Dendritic cell treated with granulocyte-macrophage colony-stimulating factor and Interleukin-4, amounts not matched to agents 40 ng/mL and 50 ng/mL, for 4 days (primary cell): ENCODE measurements at regions of chr2 and their contacts with region 1.

Region 1: GRCh38 chr2:108570416-108570815 is 36.1 kb downstream of the LIMS1 start:
- H3K4me3 Mint-ChIP-seq: no peak overlapping the region
- H3K27ac Mint-ChIP-seq: no peak overlapping the region
- H3K4me1 Mint-ChIP-seq: peaks cover 49% of the 10 kb centered on the region
- H3K27me3 Mint-ChIP-seq: no peaks in the 10 kb centered on the region

Region 2: DNA sequence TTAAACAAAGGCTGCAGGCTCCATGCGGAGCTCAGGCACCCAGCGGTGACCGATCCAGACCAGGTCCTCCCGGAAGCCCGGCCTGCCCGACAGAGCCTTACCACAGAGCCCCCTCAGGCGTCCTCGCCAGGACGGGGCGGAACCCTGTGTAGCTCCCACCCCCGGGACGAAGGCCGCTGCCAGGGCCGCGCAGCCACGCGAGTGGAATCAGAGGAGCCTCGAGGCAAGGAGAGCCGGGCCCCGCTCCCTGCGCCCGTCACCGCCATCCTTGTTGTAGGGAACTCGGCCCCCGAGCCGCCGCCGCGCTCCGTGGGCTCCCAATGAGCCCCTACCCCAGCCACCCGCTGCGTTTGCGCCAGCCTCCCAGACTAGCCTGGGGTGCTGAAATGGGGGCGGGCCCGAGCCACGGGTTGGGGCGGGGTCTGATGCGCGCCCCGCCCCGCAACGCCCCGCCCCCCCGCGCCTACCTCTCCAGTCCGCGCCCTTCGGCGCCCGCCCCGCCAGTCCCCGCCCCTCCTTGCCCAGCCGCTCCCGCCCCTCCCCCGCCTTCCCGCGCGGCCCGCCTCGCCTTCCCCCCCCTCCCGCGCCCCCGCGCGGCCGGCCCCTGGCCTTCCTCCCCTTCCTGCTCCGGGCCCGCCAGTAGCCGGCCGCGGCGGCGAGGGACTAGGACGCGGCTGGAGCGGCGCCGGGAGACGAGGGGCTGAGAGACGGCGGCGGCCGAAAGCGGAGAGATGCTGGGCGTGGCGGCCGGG is 36.4 kb before region 1 on chr2 and contains the start of gene LIMS1:
- intact Hi-C with region 1: loop called (anchors 5 kb)
- H3K4me3 Mint-ChIP-seq: peak within 1 kb of the TSS; percentile 87
- H3K27ac Mint-ChIP-seq: peak within 1 kb of the TSS; percentile 92
- H3K4me1 Mint-ChIP-seq: peaks cover 45% of the 10 kb centered on the region
- H3K27me3 Mint-ChIP-seq: no peaks in the 10 kb centered on the region

Region 3: GRCh38 chr2:108607706-108608301 is 37.4 kb after region 1 on chr2:
- intact Hi-C with region 1: no loop called
- H3K4me3 Mint-ChIP-seq: no peak overlapping the region
- H3K27ac Mint-ChIP-seq: peak overlapping the region; percentile 39
- H3K4me1 Mint-ChIP-seq: peaks cover 90% of the 10 kb centered on the region
- H3K27me3 Mint-ChIP-seq: no peaks in the 10 kb centered on the region

Region 4: GRCh38 chr2:109005686-109006204 is 435.3 kb after region 1 on chr2:
- intact Hi-C with region 1: no loop called
- H3K4me3 Mint-ChIP-seq: no peak overlapping the region
- H3K27ac Mint-ChIP-seq: no peak overlapping the region
- H3K4me1 Mint-ChIP-seq: no peaks in the 10 kb centered on the region
- H3K27me3 Mint-ChIP-seq: peaks cover 1% of the 10 kb centered on the region